Activated CD8-positive, alpha-beta T cell treated with anti-CD3 and anti-CD28 coated beads for 36 hours (primary cell): ENCODE measurements at regions of chr6 and their contacts with region 1.

Region 1: DNA sequence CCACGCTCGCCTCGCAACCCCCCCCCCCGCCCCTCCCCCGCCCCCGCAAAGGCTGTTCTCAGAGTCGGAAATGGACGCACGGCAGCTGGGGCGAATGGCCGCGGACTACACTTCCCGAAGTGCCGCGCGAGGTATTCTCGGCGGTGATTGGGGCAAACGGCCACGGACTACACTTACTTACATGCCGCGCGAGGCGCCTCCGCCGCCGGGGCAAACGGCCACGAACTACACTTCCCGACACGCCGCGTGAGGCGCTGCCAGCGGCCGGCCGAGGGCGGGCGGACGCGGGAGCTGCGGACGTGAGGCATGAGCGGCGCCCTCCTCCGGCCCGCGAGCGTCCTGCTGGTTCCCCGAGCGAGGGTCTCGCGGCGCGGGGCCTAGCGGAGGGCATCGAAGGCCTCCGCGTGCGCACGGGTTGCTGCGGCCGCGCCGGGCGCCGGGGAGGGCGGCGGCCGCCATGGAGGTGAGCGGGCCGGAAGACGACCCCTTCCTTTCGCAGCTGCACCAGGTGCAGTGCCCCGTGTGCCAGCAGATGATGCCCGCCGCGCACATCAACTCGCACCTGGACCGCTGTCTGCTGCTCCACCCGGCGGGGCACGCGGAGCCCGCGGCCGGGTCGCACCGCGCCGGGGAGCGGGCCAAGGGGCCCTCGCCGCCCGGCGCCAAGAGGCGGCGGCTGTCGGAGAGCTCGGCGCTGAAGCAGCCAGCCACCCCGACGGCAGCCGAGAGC is at the start of gene WRNIP1:
- DNase-seq: peak; percentile 98
- ATAC-seq: peak; percentile 89
- H3K4me3 Mint-ChIP-seq: peak within 1 kb of the TSS; percentile 80
- H3K27ac Mint-ChIP-seq: peak within 1 kb of the TSS; percentile 99
- H3K4me1 Mint-ChIP-seq: peaks cover 40% of the 10 kb centered on the region
- H3K27me3 Mint-ChIP-seq: no peaks in the 10 kb centered on the region
- CTCF ChIP-seq: peak; percentile 54
- total RNA-seq, gene WRNIP1: 36.1 to 36.6 TPM

Region 2: DNA sequence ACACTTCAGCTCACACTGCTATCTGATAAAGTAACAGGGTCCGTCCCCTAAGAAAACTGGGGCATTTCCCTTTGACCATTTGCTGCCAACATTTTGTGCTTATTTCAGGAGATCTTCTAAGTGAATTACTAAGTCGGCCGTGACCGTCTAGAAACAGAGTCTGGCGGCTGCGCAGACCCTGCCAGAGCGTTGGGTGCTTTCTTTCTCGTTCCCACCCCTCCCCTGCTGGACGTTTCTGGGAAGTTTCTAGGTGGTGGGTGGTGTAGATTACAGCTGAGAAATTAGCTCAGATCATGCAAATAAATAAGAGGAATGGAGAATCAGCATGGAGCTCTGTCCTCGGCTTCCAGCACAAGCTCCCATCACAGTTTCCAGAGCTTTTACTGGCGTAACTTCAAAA is 142.7 kb before region 1 on chr6:
- CTCF ChIA-PET with region 1: no interaction called
- POLR2A ChIA-PET with region 1: no interaction called
- intact Hi-C with region 1: no loop called
- DNase-seq: no peak
- ATAC-seq: no peak
- H3K4me3 Mint-ChIP-seq: no peak overlapping the region
- H3K27ac Mint-ChIP-seq: no peak overlapping the region
- H3K4me1 Mint-ChIP-seq: no peaks in the 10 kb centered on the region
- H3K27me3 Mint-ChIP-seq: peaks cover 18% of the 10 kb centered on the region
- CTCF ChIP-seq: no peak

Region 3: GRCh38 chr6:2738373-2738979 is 26.9 kb before region 1 on chr6:
- CTCF ChIA-PET with region 1: interaction called, 45 read pairs
- POLR2A ChIA-PET with region 1: no interaction called
- intact Hi-C with region 1: no loop called
- DNase-seq: peak; percentile 70
- ATAC-seq: peak; percentile 63
- H3K4me3 Mint-ChIP-seq: no peak overlapping the region
- H3K27ac Mint-ChIP-seq: no peak overlapping the region
- H3K4me1 Mint-ChIP-seq: peaks cover 5% of the 10 kb centered on the region
- H3K27me3 Mint-ChIP-seq: peaks cover 2% of the 10 kb centered on the region
- CTCF ChIP-seq: peak; percentile 73

Region 4: DNA sequence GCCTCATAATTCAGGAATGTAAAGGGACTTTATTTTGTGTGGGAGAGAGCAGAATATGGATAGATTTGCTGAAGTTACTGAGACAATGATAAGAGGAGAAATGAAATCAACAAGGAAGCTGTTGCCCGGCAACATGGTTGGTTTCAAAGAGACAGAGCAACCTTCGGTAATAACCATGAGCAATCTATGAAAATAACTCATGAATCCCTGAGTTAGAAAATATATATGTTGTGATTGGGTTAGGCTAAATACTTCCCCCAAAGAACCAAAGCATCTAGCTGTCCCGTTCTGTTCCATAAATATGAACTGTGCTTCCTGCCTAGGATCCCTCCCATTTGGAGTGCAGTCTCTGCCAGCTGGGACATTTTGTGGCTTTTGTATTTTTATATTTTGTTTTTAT is 53.3 kb after region 1 on chr6:
- CTCF ChIA-PET with region 1: no interaction called
- POLR2A ChIA-PET with region 1: no interaction called
- intact Hi-C with region 1: no loop called
- DNase-seq: peak; percentile 24
- ATAC-seq: no peak
- H3K4me3 Mint-ChIP-seq: no peak overlapping the region
- H3K27ac Mint-ChIP-seq: no peak overlapping the region
- H3K4me1 Mint-ChIP-seq: peaks cover 22% of the 10 kb centered on the region
- H3K27me3 Mint-ChIP-seq: no peaks in the 10 kb centered on the region
- CTCF ChIP-seq: no peak

Region 5: GRCh38 chr6:2841264-2842138 is 76.2 kb after region 1 on chr6 and contains the start of gene SERPINB1:
- CTCF ChIA-PET with region 1: interaction called, 11 read pairs
- POLR2A ChIA-PET with region 1: interaction called, 21 read pairs
- intact Hi-C with region 1: no loop called
- DNase-seq: peak; percentile 95
- ATAC-seq: peak; percentile 90
- H3K4me3 Mint-ChIP-seq: peak within 1 kb of the TSS; percentile 85
- H3K27ac Mint-ChIP-seq: peak within 1 kb of the TSS; percentile 92
- H3K4me1 Mint-ChIP-seq: peaks cover 65% of the 10 kb centered on the region
- H3K27me3 Mint-ChIP-seq: no peaks in the 10 kb centered on the region
- CTCF ChIP-seq: no peak
- total RNA-seq, gene SERPINB1: 55.8 to 60.0 TPM